Caco-2 (cell line): ENCODE measurements at regions of chr4 and their contacts with region 1.

Region 1: GRCh38 chr4:174402470-174403176 is 118.9 kb downstream of the CEP44 start:
- DNase-seq: peak in 1 of 2 experiments; percentile 11
- H3K4me3 ChIP-seq: no peak overlapping the region
- H3K4me3 Mint-ChIP-seq: peak overlapping the region; percentile 64
- H3K27ac Mint-ChIP-seq: peak overlapping the region; percentile 87
- H3K4me1 ChIP-seq: peaks cover 64% of the 10 kb centered on the region
- H3K4me1 Mint-ChIP-seq: peaks cover 38% of the 10 kb centered on the region
- H3K27me3 ChIP-seq: no peaks in the 10 kb centered on the region
- H3K27me3 Mint-ChIP-seq: no peaks in the 10 kb centered on the region
- CTCF ChIP-seq: no peak

Region 2: DNA sequence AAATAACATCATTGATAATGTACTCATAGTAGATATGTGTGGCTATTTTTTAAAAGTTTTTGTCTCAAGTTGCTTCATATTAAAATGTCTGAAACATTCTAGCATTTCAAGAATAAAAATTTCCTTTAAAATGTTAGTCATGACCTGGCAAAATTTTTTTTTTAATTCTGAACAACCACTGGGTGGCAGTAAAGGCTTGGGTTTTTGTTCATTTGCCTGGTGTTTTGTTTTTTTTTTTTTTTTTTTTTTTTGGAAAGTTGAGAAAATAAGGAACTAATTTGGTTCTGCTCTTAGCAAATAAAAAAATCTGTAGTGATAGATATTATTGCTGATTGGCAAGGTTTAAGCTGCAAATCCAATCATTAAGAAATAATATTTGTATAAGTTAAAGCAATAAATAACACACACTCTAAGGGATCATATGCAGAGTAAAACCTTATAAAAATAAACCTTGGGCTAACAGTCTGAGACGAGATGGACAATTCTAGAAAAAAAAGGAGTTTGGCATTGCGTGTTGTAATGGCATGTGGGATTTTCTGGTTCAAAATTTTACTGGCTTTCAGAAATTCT is 37.5 kb before region 1 on chr4:
- CTCF ChIA-PET with region 1: no interaction called
- POLR2A ChIA-PET with region 1: no interaction called
- intact Hi-C with region 1: loop called (anchors 5 kb)
- DNase-seq: peak in 1 of 2 experiments; percentile 66
- H3K4me3 ChIP-seq: no peak overlapping the region
- H3K4me3 Mint-ChIP-seq: no peak overlapping the region
- H3K27ac Mint-ChIP-seq: no peak overlapping the region
- H3K4me1 ChIP-seq: peaks cover 25% of the 10 kb centered on the region
- H3K4me1 Mint-ChIP-seq: no peaks in the 10 kb centered on the region
- H3K27me3 ChIP-seq: no peaks in the 10 kb centered on the region
- H3K27me3 Mint-ChIP-seq: no peaks in the 10 kb centered on the region
- CTCF ChIP-seq: peak; percentile 34 to 56

Region 3: DNA sequence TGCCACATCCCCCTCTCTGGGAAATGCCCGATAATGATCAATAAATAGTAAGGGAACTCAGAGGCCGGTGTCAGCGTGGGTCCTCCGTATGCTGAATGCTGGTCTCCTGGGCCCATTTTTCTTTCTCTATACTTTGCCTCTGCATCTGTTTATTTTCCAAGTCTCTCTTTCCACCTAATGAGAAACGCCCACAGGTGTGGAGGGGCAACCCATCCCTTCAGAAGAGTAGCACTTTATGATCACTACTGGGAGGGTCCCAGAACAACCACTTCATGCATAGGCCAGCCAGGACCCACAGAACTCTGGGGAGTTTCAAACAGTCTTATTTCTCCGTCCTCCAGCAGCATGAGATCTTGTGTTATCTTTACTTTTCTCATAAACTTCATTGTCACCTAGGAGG is 18.8 kb before region 1 on chr4:
- CTCF ChIA-PET with region 1: no interaction called
- POLR2A ChIA-PET with region 1: interaction called, 3 read pairs
- intact Hi-C with region 1: loop called (anchors 1 kb)
- DNase-seq: peak; percentile 59 to 60
- H3K4me3 ChIP-seq: no peak overlapping the region
- H3K4me3 Mint-ChIP-seq: peak overlapping the region; percentile 68
- H3K27ac Mint-ChIP-seq: peak overlapping the region; percentile 94
- H3K4me1 ChIP-seq: peaks cover 77% of the 10 kb centered on the region
- H3K4me1 Mint-ChIP-seq: peaks cover 28% of the 10 kb centered on the region
- H3K27me3 ChIP-seq: no peaks in the 10 kb centered on the region
- H3K27me3 Mint-ChIP-seq: no peaks in the 10 kb centered on the region
- CTCF ChIP-seq: no peak

Region 4: DNA sequence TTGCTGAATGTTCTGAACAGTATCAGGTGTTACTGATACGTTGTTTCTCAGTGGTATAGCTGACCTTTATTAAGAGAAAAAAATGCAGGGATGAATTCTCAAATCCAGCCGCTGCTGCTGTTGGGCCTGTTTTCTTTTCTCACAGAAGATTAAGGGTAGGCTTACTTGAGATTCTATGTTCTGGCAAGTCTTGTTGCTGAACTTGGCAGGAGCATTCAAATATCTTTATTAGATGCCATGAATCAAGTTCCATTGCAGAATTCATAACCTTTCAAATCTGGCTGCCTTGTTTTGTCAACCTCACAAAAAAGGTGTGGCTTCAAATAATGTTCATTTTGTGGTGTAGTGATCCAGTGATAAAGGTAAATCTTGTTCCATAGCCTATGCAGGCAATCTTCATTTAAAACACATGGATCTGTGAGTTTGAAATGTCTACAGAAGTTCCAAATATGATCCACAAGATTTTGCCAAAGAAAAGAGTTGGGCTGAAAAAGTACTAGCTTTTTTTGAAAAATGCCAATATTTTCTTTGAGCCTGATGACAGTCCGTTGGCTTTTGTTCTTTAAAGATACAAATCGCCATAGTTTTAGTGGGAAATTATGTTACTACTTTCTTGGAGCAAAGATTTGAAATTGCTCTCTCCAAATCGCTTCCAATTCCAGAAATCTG is 48.0 kb after region 1 on chr4:
- CTCF ChIA-PET with region 1: no interaction called
- POLR2A ChIA-PET with region 1: no interaction called
- intact Hi-C with region 1: loop called (anchors 1 kb)
- DNase-seq: no peak
- H3K4me3 ChIP-seq: no peak overlapping the region
- H3K4me3 Mint-ChIP-seq: peak overlapping the region; percentile 15
- H3K27ac Mint-ChIP-seq: peak overlapping the region; percentile 73
- H3K4me1 ChIP-seq: peaks cover 56% of the 10 kb centered on the region
- H3K4me1 Mint-ChIP-seq: peaks cover 24% of the 10 kb centered on the region
- H3K27me3 ChIP-seq: no peaks in the 10 kb centered on the region
- H3K27me3 Mint-ChIP-seq: no peaks in the 10 kb centered on the region
- CTCF ChIP-seq: no peak

Region 5: GRCh38 chr4:174534476-174534875 is 131.9 kb after region 1 on chr4:
- CTCF ChIA-PET with region 1: no interaction called
- POLR2A ChIA-PET with region 1: no interaction called
- intact Hi-C with region 1: loop called (anchors 1 kb)
- DNase-seq: peak; percentile 45 to 48
- H3K4me3 ChIP-seq: no peak overlapping the region
- H3K4me3 Mint-ChIP-seq: no peak overlapping the region
- H3K27ac Mint-ChIP-seq: peak overlapping the region; percentile 43
- H3K4me1 ChIP-seq: peaks cover 28% of the 10 kb centered on the region
- H3K4me1 Mint-ChIP-seq: peaks cover 30% of the 10 kb centered on the region
- H3K27me3 ChIP-seq: no peaks in the 10 kb centered on the region
- H3K27me3 Mint-ChIP-seq: no peaks in the 10 kb centered on the region
- CTCF ChIP-seq: no peak

Region 6: DNA sequence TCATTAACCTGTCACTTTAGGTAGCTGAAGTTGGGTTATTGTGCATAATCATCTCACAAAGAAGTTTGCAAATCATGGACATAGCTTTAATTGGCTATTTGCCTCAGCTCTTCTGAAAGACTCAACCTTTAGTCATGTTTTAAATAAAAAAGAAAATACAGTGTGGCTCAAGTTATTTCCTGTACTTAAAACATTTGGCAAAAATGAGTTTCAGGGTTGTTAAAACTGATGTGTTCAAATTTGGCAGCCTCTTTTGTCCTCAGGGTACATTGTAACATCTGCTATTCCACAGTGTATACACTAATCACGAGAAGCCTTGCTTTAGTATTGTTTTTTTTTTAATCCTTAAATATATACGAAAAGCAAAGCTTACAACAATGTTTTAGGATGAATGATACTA is 151.2 kb after region 1 on chr4:
- CTCF ChIA-PET with region 1: no interaction called
- POLR2A ChIA-PET with region 1: no interaction called
- intact Hi-C with region 1: no loop called
- DNase-seq: no peak
- H3K4me3 ChIP-seq: no peak overlapping the region
- H3K4me3 Mint-ChIP-seq: no peak overlapping the region
- H3K27ac Mint-ChIP-seq: no peak overlapping the region
- H3K4me1 ChIP-seq: no peaks in the 10 kb centered on the region
- H3K4me1 Mint-ChIP-seq: peaks cover 6% of the 10 kb centered on the region
- H3K27me3 ChIP-seq: no peaks in the 10 kb centered on the region
- H3K27me3 Mint-ChIP-seq: no peaks in the 10 kb centered on the region
- CTCF ChIP-seq: no peak

Region 7: GRCh38 chr4:174631901-174632758 is 229.5 kb after region 1 on chr4:
- CTCF ChIA-PET with region 1: no interaction called
- POLR2A ChIA-PET with region 1: no interaction called
- intact Hi-C with region 1: loop called (anchors 1 kb)
- DNase-seq: peak in 1 of 2 experiments; percentile 44
- H3K4me3 ChIP-seq: no peak overlapping the region
- H3K4me3 Mint-ChIP-seq: no peak overlapping the region
- H3K27ac Mint-ChIP-seq: no peak overlapping the region
- H3K4me1 ChIP-seq: peaks cover 6% of the 10 kb centered on the region; the same call in 1 of the 2 replicates
- H3K4me1 Mint-ChIP-seq: peaks cover 6% of the 10 kb centered on the region
- H3K27me3 ChIP-seq: no peaks in the 10 kb centered on the region
- H3K27me3 Mint-ChIP-seq: no peaks in the 10 kb centered on the region
- CTCF ChIP-seq: peak; percentile 69 to 85